GM12878 (cell line): ENCODE measurements at regions of chr5 and their contacts with region 1.

Region 1: GRCh38 chr5:39217365-39218281 is 1.7 kb downstream of the FYB1 start:
- DNase-seq: peak; percentile 36
- ATAC-seq: peak; percentile 89
- H3K4me3 ChIP-seq: no peak overlapping the region
- H3K27ac ChIP-seq: no peak overlapping the region
- H3K4me1 ChIP-seq: no peaks in the 10 kb centered on the region
- H3K27me3 ChIP-seq: no peaks in the 10 kb centered on the region
- CTCF ChIP-seq: peak; percentile 92 to 96 (median 95)
- EP300 ChIP-seq: no peak
- POLR2A ChIP-seq: no peak
- RAD21 ChIP-seq: peak; percentile 84

Region 2: GRCh38 chr5:38994324-38994927 is 223.2 kb before region 1 on chr5:
- CTCF ChIA-PET with region 1: no interaction called
- POLR2A ChIA-PET with region 1: no interaction called
- RAD21 ChIA-PET with region 1: no interaction called
- SMC1A ChIA-PET with region 1: no interaction called
- in situ Hi-C with region 1: no loop called
- intact Hi-C with region 1: loop called (anchors 10 kb)
- DNase-seq: no peak
- ATAC-seq: peak; percentile 91
- H3K4me3 ChIP-seq: no peak overlapping the region
- H3K27ac ChIP-seq: no peak overlapping the region
- H3K4me1 ChIP-seq: no peaks in the 10 kb centered on the region
- H3K27me3 ChIP-seq: no peaks in the 10 kb centered on the region
- CTCF ChIP-seq: peak; percentile 29 to 51 (median 49); a peak in 4 of 6 replicates
- EP300 ChIP-seq: no peak
- POLR2A ChIP-seq: no peak
- RAD21 ChIP-seq: peak; percentile 80

Region 3: GRCh38 chr5:39231705-39232525 is 14.3 kb after region 1 on chr5:
- CTCF ChIA-PET with region 1: interaction called, 34 read pairs
- POLR2A ChIA-PET with region 1: interaction called, 4 read pairs
- RAD21 ChIA-PET with region 1: interaction called, 15 read pairs
- SMC1A ChIA-PET with region 1: interaction called, 11 read pairs
- in situ Hi-C with region 1: no loop called
- intact Hi-C with region 1: no loop called
- DNase-seq: peak; percentile 73
- ATAC-seq: peak; percentile 78
- H3K4me3 ChIP-seq: no peak overlapping the region
- H3K27ac ChIP-seq: no peak overlapping the region
- H3K4me1 ChIP-seq: no peaks in the 10 kb centered on the region
- H3K27me3 ChIP-seq: no peaks in the 10 kb centered on the region
- CTCF ChIP-seq: no peak
- EP300 ChIP-seq: no peak
- POLR2A ChIP-seq: no peak
- RAD21 ChIP-seq: no peak

Region 4: GRCh38 chr5:39264528-39264927 is 46.9 kb after region 1 on chr5:
- CTCF ChIA-PET with region 1: interaction called, 5 read pairs
- POLR2A ChIA-PET with region 1: no interaction called
- RAD21 ChIA-PET with region 1: interaction called, 6 read pairs
- SMC1A ChIA-PET with region 1: interaction called, 13 read pairs
- in situ Hi-C with region 1: no loop called
- intact Hi-C with region 1: no loop called
- DNase-seq: peak; percentile 69
- ATAC-seq: peak; percentile 96
- H3K4me3 ChIP-seq: no peak overlapping the region
- H3K27ac ChIP-seq: peak overlapping the region; percentile 56
- H3K4me1 ChIP-seq: 0 out of 2 replicates have a peak, but pooled peaks cover 2% of the 10 kb centered on the region
- H3K27me3 ChIP-seq: no peaks in the 10 kb centered on the region
- CTCF ChIP-seq: no peak
- EP300 ChIP-seq: no peak
- POLR2A ChIP-seq: no peak
- RAD21 ChIP-seq: no peak

Region 5: DNA sequence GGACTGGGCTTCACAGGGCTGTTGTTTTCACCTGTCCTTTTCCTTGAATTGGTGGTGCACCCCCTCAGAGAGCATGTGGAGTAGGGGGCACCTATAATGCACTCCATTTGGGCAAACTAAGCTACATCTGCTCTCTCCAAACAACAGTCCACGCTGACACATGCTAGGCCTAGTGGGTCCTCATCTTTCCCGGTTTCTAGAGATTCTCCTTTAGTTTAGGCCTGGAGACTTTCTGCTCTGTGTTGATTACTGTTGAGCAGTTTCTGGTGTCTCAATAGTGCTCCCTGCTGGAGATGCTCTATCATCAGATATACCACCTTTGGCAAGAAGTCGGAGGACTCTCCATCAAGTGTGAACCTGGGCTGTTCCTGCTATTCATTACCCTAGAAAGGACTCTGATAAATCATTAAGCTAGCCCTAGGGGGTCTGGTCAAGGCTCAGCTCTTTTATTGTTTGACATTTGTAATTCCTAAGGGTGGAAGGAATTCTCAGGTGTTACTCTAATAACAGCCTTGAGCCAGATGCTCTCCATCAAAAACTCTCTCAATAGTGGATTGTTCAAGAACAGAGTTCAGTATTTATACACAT is 65.7 kb after region 1 on chr5:
- CTCF ChIA-PET with region 1: interaction called, 294 read pairs
- POLR2A ChIA-PET with region 1: interaction called, 3 read pairs
- RAD21 ChIA-PET with region 1: interaction called, 77 read pairs
- SMC1A ChIA-PET with region 1: interaction called, 192 read pairs
- in situ Hi-C with region 1: loop called (anchors 5 kb)
- intact Hi-C with region 1: loop called (anchors 1 kb)
- DNase-seq: no peak
- ATAC-seq: peak; percentile 98
- H3K4me3 ChIP-seq: no peak overlapping the region
- H3K27ac ChIP-seq: no peak overlapping the region
- H3K4me1 ChIP-seq: no peaks in the 10 kb centered on the region
- H3K27me3 ChIP-seq: no peaks in the 10 kb centered on the region
- CTCF ChIP-seq: peak; percentile 57 to 79 (median 58); a peak in 5 of 6 replicates
- EP300 ChIP-seq: no peak
- POLR2A ChIP-seq: no peak
- RAD21 ChIP-seq: peak; percentile 91

Region 6: DNA sequence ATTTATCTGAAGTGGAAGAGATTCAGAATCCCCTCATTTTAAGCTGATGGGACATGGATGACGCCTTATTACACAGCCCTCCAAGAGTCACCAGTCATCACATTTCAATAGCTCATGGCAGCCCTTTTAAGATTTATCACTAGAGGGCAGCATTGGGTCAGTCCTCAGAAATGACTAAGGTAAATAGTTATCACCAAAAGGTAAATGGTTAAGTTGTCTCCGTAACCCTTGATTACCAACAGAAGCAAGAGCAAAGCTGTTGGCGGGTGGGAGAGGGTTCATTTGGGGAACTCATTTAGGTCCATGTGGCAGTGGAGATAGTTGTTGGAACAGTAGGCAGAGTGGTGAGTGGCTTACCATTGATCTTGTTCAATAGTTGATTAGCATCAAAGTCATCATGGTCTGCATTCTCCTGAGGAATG is 158.7 kb after region 1 on chr5:
- CTCF ChIA-PET with region 1: interaction called, 23 read pairs
- POLR2A ChIA-PET with region 1: no interaction called
- RAD21 ChIA-PET with region 1: interaction called, 7 read pairs
- SMC1A ChIA-PET with region 1: interaction called, 14 read pairs
- in situ Hi-C with region 1: no loop called
- intact Hi-C with region 1: loop called (anchors 10 kb)
- DNase-seq: no peak
- ATAC-seq: peak; percentile 92
- H3K4me3 ChIP-seq: no peak overlapping the region
- H3K27ac ChIP-seq: no peak overlapping the region
- H3K4me1 ChIP-seq: no peaks in the 10 kb centered on the region
- H3K27me3 ChIP-seq: no peaks in the 10 kb centered on the region
- CTCF ChIP-seq: peak; percentile 65 to 73 (median 68)
- EP300 ChIP-seq: no peak
- POLR2A ChIP-seq: no peak
- RAD21 ChIP-seq: peak; percentile 72